Naive thymus-derived CD4-positive, alpha-beta T cell (primary cell): ENCODE measurements at regions of chr3 and their contacts with region 1.

Region 1: GRCh38 chr3:194472290-194472920 is 14.4 kb downstream of the ATP13A3 start:
- DNase-seq: peak in 7 of 9 donors; percentile 35 to 63 (median 46)
- ATAC-seq: peak; percentile 94
- H3K4me3 ChIP-seq: no peak overlapping the region
- H3K4me3 Mint-ChIP-seq: no peak overlapping the region
- H3K27ac ChIP-seq: no peak overlapping the region
- H3K27ac Mint-ChIP-seq: peak overlapping the region in 1 of 9 donors; percentile 36
- H3K4me1 ChIP-seq: no peaks in the 10 kb centered on the region
- H3K4me1 Mint-ChIP-seq: peaks cover 7 to 24% (median 16%) of the 10 kb centered on the region in 7 donors
- H3K27me3 ChIP-seq: no peaks in the 10 kb centered on the region
- H3K27me3 Mint-ChIP-seq: no peaks in the 10 kb centered on the region

Region 2: DNA sequence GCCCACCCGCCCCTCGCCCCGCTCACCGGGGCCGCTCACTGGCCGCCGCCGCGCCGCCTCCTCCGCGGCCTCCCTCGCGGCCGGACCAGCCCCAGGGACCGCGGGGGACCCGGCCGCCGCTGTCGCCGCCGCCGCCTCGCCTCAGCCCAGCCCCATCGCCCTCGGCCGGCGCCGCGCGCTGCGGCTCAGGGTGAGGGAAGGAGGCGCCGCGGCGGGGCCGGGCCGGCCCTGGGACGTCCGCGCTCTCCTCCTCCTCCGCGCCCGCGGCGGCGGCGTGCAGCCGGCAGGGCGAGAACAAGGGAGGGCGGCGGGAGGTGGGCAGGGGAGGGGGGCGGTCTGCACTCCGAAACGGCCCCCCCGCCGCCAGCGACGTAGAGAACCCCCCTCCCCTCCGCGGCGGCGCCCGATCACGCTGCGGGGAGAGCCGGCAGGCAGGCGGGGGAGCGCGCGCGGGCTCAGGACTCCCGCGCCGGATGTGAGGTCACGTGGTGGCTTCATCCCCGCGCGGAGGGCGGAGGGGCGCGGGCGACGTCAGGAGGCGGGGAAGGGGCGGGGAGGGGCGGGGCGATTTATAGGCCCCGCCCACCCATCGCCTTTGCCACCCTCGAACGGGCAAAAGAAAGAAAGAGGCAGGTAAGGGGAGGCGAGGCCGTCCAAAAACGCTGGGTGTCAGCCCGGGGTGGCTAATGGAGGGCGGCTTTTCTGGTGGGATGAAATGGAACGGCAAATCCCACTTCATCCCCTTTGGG is 14.3 kb after region 1 on chr3 and contains the start of gene ATP13A3:
- CTCF ChIA-PET with region 1: interaction called, 3 read pairs
- POLR2A ChIA-PET with region 1: interaction called, 3 read pairs
- intact Hi-C with region 1: loop called (anchors 1 kb)
- DNase-seq: peak; percentile 84 to 93 (median 91)
- ATAC-seq: peak; percentile 93
- H3K4me3 ChIP-seq: peak within 1 kb of the TSS; percentile 83
- H3K4me3 Mint-ChIP-seq: peak within 1 kb of the TSS; percentile 83 to 98 (median 93)
- H3K27ac ChIP-seq: peak within 1 kb of the TSS; percentile 82
- H3K27ac Mint-ChIP-seq: peak within 1 kb of the TSS; percentile 82 to 96 (median 94)
- H3K4me1 ChIP-seq: peaks cover 20 to 25% of the 10 kb centered on the region in 2 donors
- H3K4me1 Mint-ChIP-seq: peaks cover 41 to 60% (median 45%) of the 10 kb centered on the region in 7 donors
- H3K27me3 ChIP-seq: no peaks in the 10 kb centered on the region
- H3K27me3 Mint-ChIP-seq: no peaks in the 10 kb centered on the region
- total RNA-seq, gene ATP13A3: 46.5 to 81.8 (median 58.4) TPM

Region 3: DNA sequence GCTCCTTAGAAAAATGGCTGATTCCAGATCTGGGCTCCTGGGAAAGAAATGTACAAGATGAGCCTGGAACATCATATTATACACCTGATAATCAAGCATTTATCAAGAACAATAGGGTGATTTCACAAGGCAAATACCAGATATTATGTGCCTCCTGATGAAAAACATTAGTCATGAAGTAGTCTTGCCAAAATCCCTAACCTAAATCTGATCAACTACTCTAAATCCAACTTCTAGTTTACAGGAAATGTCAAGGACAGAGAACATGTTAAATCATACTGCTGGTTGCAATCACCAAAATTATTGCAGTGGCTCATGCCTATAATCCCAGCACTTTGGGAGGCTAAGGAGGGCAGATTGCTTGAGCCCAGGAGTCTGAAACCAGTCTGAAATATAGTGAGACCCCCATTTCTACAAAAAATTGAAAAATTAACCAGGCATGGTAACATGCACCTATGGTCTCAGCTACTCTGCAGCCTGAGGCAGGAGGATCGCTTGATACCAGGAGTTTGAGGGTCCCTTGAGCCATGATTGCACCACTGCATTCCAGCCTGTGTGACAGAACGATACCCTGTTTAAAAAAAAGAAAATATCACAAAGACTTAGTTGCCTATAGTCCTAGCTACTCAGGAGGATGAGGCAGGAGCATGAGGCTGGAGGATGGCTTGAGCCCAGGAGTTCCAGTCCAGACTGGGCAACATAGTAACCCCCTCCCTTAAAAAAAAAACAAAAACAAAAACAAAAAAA is 49.3 kb after region 1 on chr3:
- CTCF ChIA-PET with region 1: interaction called, 3 read pairs
- POLR2A ChIA-PET with region 1: no interaction called
- intact Hi-C with region 1: loop called in 1 of 2 experiments (anchors 1 kb)
- DNase-seq: no peak
- ATAC-seq: no peak
- H3K4me3 ChIP-seq: no peak overlapping the region
- H3K4me3 Mint-ChIP-seq: no peak overlapping the region
- H3K27ac ChIP-seq: no peak overlapping the region
- H3K27ac Mint-ChIP-seq: no peak overlapping the region
- H3K4me1 ChIP-seq: no peaks in the 10 kb centered on the region
- H3K4me1 Mint-ChIP-seq: peaks cover 0 to 17% (median 6%) of the 10 kb centered on the region in 7 donors
- H3K27me3 ChIP-seq: no peaks in the 10 kb centered on the region
- H3K27me3 Mint-ChIP-seq: peaks cover 0 to 1% (median 0%) of the 10 kb centered on the region in 5 donors

Region 4: GRCh38 chr3:194592798-194593752 is 120.7 kb after region 1 on chr3:
- CTCF ChIA-PET with region 1: interaction called, 13 read pairs
- POLR2A ChIA-PET with region 1: interaction called, 3 read pairs
- intact Hi-C with region 1: loop called (anchors 1 kb)
- DNase-seq: no peak
- ATAC-seq: no peak
- H3K4me3 ChIP-seq: no peak overlapping the region
- H3K4me3 Mint-ChIP-seq: no peak overlapping the region
- H3K27ac ChIP-seq: no peak overlapping the region
- H3K27ac Mint-ChIP-seq: no peak overlapping the region
- H3K4me1 ChIP-seq: no peaks in the 10 kb centered on the region
- H3K4me1 Mint-ChIP-seq: peaks cover 0 to 7% (median 4%) of the 10 kb centered on the region in 7 donors
- H3K27me3 ChIP-seq: no peaks in the 10 kb centered on the region
- H3K27me3 Mint-ChIP-seq: no peaks in the 10 kb centered on the region

Region 5: GRCh38 chr3:195106418-195106906 is 634.1 kb after region 1 on chr3:
- CTCF ChIA-PET with region 1: no interaction called
- POLR2A ChIA-PET with region 1: no interaction called
- intact Hi-C with region 1: loop called in 1 of 2 experiments (anchors 10 kb)
- DNase-seq: peak; percentile 44 to 82 (median 70)
- ATAC-seq: peak; percentile 89
- H3K4me3 ChIP-seq: no peak overlapping the region
- H3K4me3 Mint-ChIP-seq: peak overlapping the region; percentile 10 to 71 (median 62)
- H3K27ac ChIP-seq: no peak overlapping the region
- H3K27ac Mint-ChIP-seq: peak overlapping the region in 1 of 9 donors; percentile 43
- H3K4me1 ChIP-seq: no peaks in the 10 kb centered on the region
- H3K4me1 Mint-ChIP-seq: peaks cover 5 to 10% (median 6%) of the 10 kb centered on the region in 7 donors
- H3K27me3 ChIP-seq: no peaks in the 10 kb centered on the region
- H3K27me3 Mint-ChIP-seq: no peaks in the 10 kb centered on the region